Activated naive CD8-positive, alpha-beta T cell treated with anti-CD3 and anti-CD28 coated beads, Interleukin-2, amount 10 ng/mL, durations not matched to agents 7 days and 5 days (primary cell): ENCODE measurements at regions of chr11 and their contacts with region 1.

Region 1: DNA sequence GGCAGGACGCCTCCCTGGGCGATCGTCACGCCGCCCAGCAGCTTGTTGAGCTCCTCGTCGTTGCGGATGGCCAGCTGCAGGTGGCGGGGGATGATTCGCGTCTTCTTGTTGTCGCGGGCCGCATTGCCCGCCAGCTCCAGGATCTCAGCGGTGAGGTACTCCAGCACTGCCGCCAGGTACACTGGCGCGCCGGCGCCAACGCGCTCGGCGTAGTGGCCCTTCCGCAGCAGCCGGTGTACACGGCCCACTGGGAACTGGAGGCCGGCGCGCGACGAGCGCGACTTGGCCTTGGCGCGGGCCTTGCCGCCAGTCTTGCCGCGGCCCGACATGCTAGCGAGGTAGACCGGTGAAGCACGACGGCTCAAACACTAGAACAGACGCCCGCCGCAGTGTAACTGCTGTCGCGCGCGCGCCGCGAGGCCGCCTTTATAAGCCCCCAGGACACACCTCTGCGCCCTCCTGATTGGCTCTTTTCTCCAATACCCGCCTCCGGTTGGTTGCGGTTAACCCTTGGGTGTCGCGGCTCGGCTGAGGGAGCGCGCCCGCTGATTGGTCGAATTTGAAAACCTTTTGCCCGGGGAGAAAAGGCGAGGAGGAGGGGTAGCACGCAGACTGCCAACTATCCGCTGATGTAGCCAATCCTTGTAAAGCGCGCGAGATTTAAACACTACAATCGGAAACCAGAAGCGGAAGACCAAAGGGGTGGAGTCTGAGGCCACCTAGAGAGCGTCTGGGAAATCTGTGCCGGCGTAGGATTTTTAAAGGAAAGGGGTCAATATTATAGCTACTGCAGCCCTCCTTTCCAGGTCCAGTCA is 6.4 kb downstream of the DPAGT1 start:
- DNase-seq: peak; percentile 99
- ATAC-seq: peak; percentile 80
- H3K4me3 Mint-ChIP-seq: peak overlapping the region; percentile 91
- H3K27ac Mint-ChIP-seq: peak overlapping the region; percentile 92
- H3K4me1 Mint-ChIP-seq: peaks cover 46% of the 10 kb centered on the region
- H3K27me3 Mint-ChIP-seq: no peaks in the 10 kb centered on the region

Region 2: DNA sequence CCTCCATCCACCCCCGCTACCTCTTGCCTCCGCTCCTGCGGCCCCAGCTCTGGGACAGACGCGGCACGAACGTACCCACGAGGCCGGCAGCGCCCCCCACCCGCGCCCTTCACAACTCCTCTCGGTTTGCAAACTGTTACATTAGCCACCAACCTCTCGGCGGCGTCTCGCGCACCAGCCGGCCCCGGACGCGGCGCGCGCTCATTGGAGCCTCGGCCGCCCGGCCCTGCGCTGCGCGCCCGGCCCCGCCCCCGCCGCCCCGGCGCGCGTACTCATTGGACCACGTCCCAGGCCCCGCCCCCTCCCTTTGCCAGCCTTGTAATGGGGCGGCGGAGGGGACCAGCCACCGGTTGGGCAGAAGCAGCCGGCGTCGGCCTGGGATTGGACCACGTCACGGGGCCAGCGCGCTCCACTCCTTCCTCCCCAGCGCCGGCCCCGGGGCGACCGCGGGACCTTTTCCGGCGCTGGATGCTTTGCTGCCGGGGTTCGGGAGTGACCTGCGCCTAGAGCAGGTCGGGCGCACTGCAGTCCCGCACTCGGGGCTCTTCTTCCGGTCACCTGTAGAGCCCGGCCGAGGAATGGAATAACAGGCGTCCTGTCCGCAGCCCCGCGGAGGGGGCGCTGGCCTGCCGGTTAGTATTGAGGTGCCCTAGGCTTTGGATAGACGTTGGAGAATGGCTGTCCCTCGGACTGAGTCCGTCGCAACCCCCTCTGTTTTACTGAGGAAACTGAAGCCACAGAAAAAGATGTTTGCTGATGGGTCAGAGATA is 38.1 kb before region 1 on chr11 and contains the start of gene HYOU1:
- POLR2A ChIA-PET with region 1: interaction called, 21 read pairs
- DNase-seq: peak; percentile 99
- ATAC-seq: peak; percentile 98
- H3K4me3 Mint-ChIP-seq: peak within 1 kb of the TSS; percentile 98
- H3K27ac Mint-ChIP-seq: peak within 1 kb of the TSS; percentile 98
- H3K4me1 Mint-ChIP-seq: peaks cover 22% of the 10 kb centered on the region
- H3K27me3 Mint-ChIP-seq: no peaks in the 10 kb centered on the region
- total RNA-seq, gene HYOU1: 76.5 to 83.1 TPM

Region 3: DNA sequence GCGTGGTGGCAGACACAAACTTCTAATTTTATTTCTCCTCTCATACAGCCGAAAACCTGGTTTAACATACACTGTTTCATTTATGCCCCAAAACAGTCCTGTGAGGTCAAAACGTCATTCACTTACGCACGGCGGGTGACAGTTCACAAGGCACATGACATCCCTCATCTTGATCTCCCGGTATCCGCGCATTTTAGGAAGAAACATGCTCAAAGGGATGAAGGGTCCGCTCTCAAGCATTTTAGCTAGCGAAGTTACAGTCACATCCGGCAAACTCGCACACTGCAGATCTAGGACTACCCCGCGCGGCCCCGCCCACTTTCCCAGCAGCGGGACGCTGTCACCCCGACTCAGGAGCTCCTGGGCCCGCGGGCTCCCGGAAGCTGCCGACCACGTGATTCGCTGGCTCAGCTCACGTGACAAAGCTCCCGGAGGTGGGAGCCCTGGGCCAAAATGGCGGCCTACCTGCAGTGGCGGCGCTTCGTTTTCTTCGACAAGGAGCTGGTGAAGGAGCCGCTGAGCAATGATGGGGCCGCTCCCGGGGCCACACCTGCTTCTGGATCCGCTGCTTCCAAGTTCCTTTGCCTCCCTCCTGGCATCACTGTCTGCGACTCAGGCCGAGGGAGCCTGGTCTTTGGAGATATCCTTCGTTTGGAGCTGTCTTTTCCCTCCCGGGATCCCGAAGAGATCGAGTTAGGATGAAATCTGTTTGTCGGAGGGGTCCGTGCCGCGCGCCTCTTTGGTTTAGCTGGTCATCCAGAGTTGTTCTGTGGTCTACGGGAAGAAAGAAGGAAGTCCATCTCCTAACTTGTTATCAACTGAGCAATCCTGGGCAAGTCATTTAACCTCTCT is 27.7 kb before region 1 on chr11 and contains the start of gene VPS11:
- POLR2A ChIA-PET with region 1: interaction called, 36 read pairs
- DNase-seq: peak; percentile 98
- ATAC-seq: peak; percentile 99
- H3K4me3 Mint-ChIP-seq: peak within 1 kb of the TSS; percentile 92
- H3K27ac Mint-ChIP-seq: peak within 1 kb of the TSS; percentile 96
- H3K4me1 Mint-ChIP-seq: peaks cover 30% of the 10 kb centered on the region
- H3K27me3 Mint-ChIP-seq: no peaks in the 10 kb centered on the region
- total RNA-seq, gene VPS11: 41.2 to 46.2 TPM

Region 4: GRCh38 chr11:119084663-119085436 is 10.4 kb before region 1 on chr11 and contains the start of gene HMBS:
- POLR2A ChIA-PET with region 1: interaction called, 83 read pairs
- DNase-seq: peak; percentile 92
- ATAC-seq: peak; percentile 88
- H3K4me3 Mint-ChIP-seq: peak within 1 kb of the TSS; percentile 93
- H3K27ac Mint-ChIP-seq: peak within 1 kb of the TSS; percentile 90
- H3K4me1 Mint-ChIP-seq: peaks cover 25% of the 10 kb centered on the region
- H3K27me3 Mint-ChIP-seq: no peaks in the 10 kb centered on the region
- total RNA-seq, gene HMBS: 18.0 to 18.8 TPM

Region 5: GRCh38 chr11:119121008-119121810 is 25.9 kb after region 1 on chr11 and contains the start of gene HINFP:
- POLR2A ChIA-PET with region 1: interaction called, 14 read pairs
- DNase-seq: peak; percentile 97
- ATAC-seq: peak; percentile 97
- H3K4me3 Mint-ChIP-seq: peak within 1 kb of the TSS; percentile 93
- H3K27ac Mint-ChIP-seq: peak within 1 kb of the TSS; percentile 86
- H3K4me1 Mint-ChIP-seq: peaks cover 25% of the 10 kb centered on the region
- H3K27me3 Mint-ChIP-seq: no peaks in the 10 kb centered on the region
- total RNA-seq, gene HINFP: 52.4 to 52.6 TPM

Region 6: GRCh38 chr11:119168471-119169281 is 73.4 kb after region 1 on chr11 and contains the start of gene NLRX1:
- POLR2A ChIA-PET with region 1: interaction called, 15 read pairs
- DNase-seq: peak; percentile 84
- ATAC-seq: peak; percentile 89
- H3K4me3 Mint-ChIP-seq: peak within 1 kb of the TSS; percentile 92
- H3K27ac Mint-ChIP-seq: peak within 1 kb of the TSS; percentile 94
- H3K4me1 Mint-ChIP-seq: peaks cover 19% of the 10 kb centered on the region
- H3K27me3 Mint-ChIP-seq: no peaks in the 10 kb centered on the region
- total RNA-seq, gene NLRX1: 20.7 to 25.2 TPM

Region 7: DNA sequence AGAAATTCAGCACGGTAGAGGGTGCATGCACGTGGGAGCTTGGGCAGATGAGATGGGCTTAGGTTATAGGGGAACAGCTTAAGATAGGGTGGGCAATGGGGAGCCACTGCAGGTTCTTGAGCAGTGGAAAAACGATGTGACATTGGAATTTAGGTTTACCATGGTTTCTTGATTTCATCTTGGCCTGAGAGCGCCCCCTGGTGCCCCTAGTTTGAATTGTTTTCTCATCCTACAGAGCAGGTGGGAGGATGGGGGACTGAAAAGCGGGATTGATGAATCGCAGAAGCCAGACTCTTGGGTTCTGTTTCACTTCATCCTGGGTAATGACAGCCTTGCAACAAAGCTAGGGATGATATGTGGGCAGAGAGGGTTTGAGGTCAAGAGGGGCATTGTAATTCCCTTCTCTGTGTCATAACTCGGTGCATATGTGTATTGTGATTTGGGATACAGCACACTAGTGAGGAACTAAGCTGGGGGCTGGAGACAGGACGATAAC is 228.3 kb after region 1 on chr11:
- POLR2A ChIA-PET with region 1: interaction called, 11 read pairs
- DNase-seq: peak; percentile 79
- ATAC-seq: no peak
- H3K4me3 Mint-ChIP-seq: no peak overlapping the region
- H3K27ac Mint-ChIP-seq: no peak overlapping the region
- H3K4me1 Mint-ChIP-seq: peaks cover 16% of the 10 kb centered on the region
- H3K27me3 Mint-ChIP-seq: peaks cover 10% of the 10 kb centered on the region